Tibial artery (tissue), 4 donors: ENCODE measurements at regions of chr5 and their contacts with region 1.

Region 1: GRCh38 chr5:43156388-43156787 is 35.6 kb upstream of the NIM1K start:
- DNase-seq: no peak
- H3K4me3 ChIP-seq: no peak overlapping the region
- H3K27ac ChIP-seq: no peak overlapping the region
- H3K4me1 ChIP-seq: peaks cover 0 to 45% (median 13%) of the 10 kb centered on the region in 4 donors
- H3K27me3 ChIP-seq: no peaks in the 10 kb centered on the region
- CTCF ChIP-seq: no peak

Region 2: DNA sequence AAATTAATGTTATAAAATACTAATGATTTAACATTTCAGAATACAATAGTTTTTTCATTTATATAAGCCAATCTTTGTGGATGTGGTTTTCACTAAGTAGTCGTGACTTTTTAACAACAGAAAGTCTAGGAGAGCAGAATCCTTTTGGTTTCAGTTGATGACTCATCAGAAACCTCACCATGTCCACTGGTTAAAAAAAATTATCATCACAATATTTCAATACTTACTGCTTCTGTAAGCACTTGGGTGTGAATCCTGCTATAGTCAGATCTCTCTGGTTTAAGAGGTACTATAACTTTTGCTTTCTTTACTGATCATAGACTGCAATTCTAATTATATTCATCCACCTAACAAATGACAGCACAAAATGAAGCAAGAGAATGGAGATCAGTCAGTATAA is 1729.5 kb after region 1 on chr5:
- intact Hi-C with region 1: loop called (anchors 5 kb)
- DNase-seq: no peak
- H3K4me3 ChIP-seq: no peak overlapping the region
- H3K27ac ChIP-seq: no peak overlapping the region
- H3K4me1 ChIP-seq: no peaks in the 10 kb centered on the region
- H3K27me3 ChIP-seq: no peaks in the 10 kb centered on the region
- CTCF ChIP-seq: no peak